ENCODE measurements at regions of chr10 and their contacts with region 1.

Region 1: GRCh38 chr10:31697271-31698180 is 231.1 kb downstream of the ARHGAP12 start:
- DNase-seq: peak; percentile 98
- H3K4me3 ChIP-seq: peak overlapping the region in 1 of 3 experiments; percentile 24
- H3K27ac ChIP-seq: peak overlapping the region; percentile 90
- H3K4me1 ChIP-seq: peaks cover 57% of the 10 kb centered on the region
- H3K27me3 ChIP-seq: no peaks in the 10 kb centered on the region
- CTCF ChIP-seq: no peak
- POLR2A ChIP-seq: peak; percentile 75

Region 2: DNA sequence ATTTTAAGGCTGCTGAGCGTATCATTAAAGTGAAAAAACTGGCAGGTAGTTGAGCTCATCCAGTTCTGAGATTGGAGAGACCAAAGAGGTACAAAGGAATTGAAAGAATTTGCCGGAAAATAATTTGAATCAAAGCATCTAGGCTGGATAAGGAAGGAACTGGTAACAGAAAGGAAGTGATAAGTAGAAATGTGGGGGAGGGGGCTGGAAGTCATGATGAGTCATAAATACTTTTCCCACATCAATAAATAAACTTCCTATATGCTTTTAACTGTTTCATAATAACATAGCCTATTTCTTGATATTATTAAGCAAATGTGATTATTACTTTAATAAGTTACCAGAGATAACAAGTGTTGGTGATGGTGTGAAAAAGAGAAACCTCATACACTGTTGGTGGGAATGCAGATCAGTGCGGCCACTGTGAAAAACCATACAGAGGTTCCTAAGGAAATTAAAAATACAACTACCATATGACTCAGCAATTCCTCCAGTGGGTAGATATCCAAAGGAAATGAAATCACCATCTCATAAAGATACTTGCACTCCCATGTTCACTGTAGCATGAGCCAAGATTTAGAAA is 692.8 kb before region 1 on chr10:
- CTCF ChIA-PET with region 1: no interaction called
- POLR2A ChIA-PET with region 1: no interaction called
- dilution Hi-C with region 1: no loop called
- intact Hi-C with region 1: loop called (anchors 2 kb)
- DNase-seq: peak; percentile 97
- H3K4me3 ChIP-seq: peak overlapping the region in 1 of 3 experiments; percentile 11
- H3K27ac ChIP-seq: peak overlapping the region; percentile 95
- H3K4me1 ChIP-seq: peaks cover 70% of the 10 kb centered on the region
- H3K27me3 ChIP-seq: no peaks in the 10 kb centered on the region
- CTCF ChIP-seq: no peak
- POLR2A ChIP-seq: peak; percentile 67

Region 3: DNA sequence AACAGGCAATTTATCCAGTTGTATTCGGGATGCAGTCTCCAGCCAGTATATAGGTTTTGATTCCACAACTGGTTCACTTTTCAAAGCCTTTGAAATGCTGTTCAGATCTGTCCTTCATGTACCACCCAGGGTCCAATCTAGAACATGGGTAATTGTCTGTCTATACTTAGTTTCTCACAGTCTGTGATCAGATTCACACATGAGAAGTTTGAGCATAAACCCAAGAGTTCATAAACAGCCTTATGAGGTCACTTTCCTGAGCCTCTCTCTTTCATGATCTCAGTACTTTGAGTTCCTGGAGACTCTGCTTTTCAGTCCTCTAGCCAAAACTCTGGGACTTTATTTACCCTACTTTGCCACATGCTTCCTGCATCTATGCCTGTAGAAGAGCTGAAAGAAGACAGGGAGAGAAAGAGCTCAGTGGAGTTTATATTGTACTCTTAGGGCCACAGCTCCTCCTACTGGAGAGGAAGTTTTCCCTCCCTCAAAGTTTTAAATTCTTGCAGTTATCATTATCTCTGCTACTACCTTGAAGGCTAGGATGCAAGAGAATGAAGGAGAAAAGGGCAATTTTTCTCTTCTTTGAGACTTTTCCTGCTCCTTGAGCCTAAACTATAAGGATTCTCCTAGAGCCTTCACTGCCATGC is 206.5 kb before region 1 on chr10:
- CTCF ChIA-PET with region 1: no interaction called
- POLR2A ChIA-PET with region 1: no interaction called
- dilution Hi-C with region 1: no loop called
- intact Hi-C with region 1: loop called (anchors 5 kb)
- DNase-seq: peak; percentile 63
- H3K4me3 ChIP-seq: no peak overlapping the region
- H3K27ac ChIP-seq: peak overlapping the region; percentile 7
- H3K4me1 ChIP-seq: peaks cover 13% of the 10 kb centered on the region
- H3K27me3 ChIP-seq: no peaks in the 10 kb centered on the region
- CTCF ChIP-seq: peak; percentile 50 to 53
- POLR2A ChIP-seq: no peak

Region 4: GRCh38 chr10:31650010-31650409 is 47.5 kb before region 1 on chr10:
- CTCF ChIA-PET with region 1: interaction called, 3 read pairs
- POLR2A ChIA-PET with region 1: no interaction called
- dilution Hi-C with region 1: no loop called
- intact Hi-C with region 1: loop called (anchors 1 kb)
- DNase-seq: peak; percentile 95
- H3K4me3 ChIP-seq: peak overlapping the region in 1 of 3 experiments; percentile 30
- H3K27ac ChIP-seq: peak overlapping the region; percentile 69
- H3K4me1 ChIP-seq: peaks cover 17% of the 10 kb centered on the region
- H3K27me3 ChIP-seq: no peaks in the 10 kb centered on the region
- CTCF ChIP-seq: no peak
- POLR2A ChIP-seq: peak; percentile 59

Region 5: DNA sequence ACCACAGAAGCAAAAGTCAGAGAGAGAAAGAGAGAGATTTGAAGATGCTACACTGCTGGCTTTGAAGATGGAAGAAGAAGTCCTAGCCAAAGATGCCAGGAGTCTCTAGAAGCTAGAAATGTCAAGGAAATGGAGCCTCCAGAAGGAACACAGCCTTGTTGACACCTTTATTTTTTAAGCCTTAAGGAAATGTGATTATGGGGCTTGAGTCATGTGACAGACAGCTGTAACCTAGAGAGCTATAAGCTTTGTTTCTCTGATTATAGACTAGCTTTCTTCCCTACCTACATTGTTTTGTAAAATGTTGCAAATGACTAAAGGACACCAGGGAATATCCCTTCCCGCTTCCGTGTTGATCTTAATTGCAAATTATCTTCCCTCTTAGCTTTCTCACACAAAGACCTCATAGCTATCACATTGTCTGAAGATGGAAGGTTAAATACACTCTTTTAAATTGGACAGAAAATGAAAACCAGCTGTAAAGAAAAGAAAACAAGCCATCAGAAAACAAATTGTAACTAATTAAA is 31.2 kb after region 1 on chr10:
- CTCF ChIA-PET with region 1: no interaction called
- POLR2A ChIA-PET with region 1: no interaction called
- dilution Hi-C with region 1: no loop called
- intact Hi-C with region 1: no loop called
- DNase-seq: no peak
- H3K4me3 ChIP-seq: no peak overlapping the region
- H3K27ac ChIP-seq: no peak overlapping the region
- H3K4me1 ChIP-seq: no peaks in the 10 kb centered on the region
- H3K27me3 ChIP-seq: peaks cover 16 to 23% of the 10 kb centered on the region in 2 experiments
- CTCF ChIP-seq: no peak
- POLR2A ChIP-seq: no peak

Region 6: GRCh38 chr10:31770307-31770902 is 72.9 kb after region 1 on chr10:
- CTCF ChIA-PET with region 1: interaction called, 16 read pairs
- POLR2A ChIA-PET with region 1: no interaction called
- dilution Hi-C with region 1: no loop called
- intact Hi-C with region 1: no loop called
- DNase-seq: peak; percentile 71
- H3K4me3 ChIP-seq: no peak overlapping the region
- H3K27ac ChIP-seq: no peak overlapping the region
- H3K4me1 ChIP-seq: peaks cover 7% of the 10 kb centered on the region
- H3K27me3 ChIP-seq: no peaks in the 10 kb centered on the region
- CTCF ChIP-seq: peak; percentile 84 to 86
- POLR2A ChIP-seq: no peak